OCI-LY7 (cell line): ENCODE measurements at regions of chr5 and their contacts with region 1.

Region 1: DNA sequence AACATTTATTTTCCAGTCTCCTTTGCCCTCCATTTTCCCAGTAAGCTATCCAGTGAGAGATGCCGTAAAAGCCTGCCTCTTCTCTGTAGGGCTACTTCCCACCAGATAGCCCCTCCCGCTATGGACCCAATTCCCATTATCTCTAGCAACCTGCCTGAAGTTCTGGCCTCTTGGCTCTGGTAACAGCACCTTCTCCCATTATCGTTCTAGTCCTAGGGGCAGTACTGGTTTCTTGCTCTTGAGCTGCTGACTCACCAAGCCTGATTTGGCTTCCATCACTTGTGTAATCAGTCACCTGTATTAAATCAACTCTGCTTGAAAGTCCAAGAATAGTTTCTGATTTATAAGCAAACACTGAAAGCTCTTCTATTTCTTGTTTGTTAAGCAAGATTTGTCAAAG is 42.8 kb upstream of the PARP8 start:
- DNase-seq: no peak
- H3K4me3 ChIP-seq: no peak overlapping the region
- H3K27ac ChIP-seq: no peak overlapping the region
- H3K4me1 ChIP-seq: no peaks in the 10 kb centered on the region
- CTCF ChIP-seq: no peak

Region 2: DNA sequence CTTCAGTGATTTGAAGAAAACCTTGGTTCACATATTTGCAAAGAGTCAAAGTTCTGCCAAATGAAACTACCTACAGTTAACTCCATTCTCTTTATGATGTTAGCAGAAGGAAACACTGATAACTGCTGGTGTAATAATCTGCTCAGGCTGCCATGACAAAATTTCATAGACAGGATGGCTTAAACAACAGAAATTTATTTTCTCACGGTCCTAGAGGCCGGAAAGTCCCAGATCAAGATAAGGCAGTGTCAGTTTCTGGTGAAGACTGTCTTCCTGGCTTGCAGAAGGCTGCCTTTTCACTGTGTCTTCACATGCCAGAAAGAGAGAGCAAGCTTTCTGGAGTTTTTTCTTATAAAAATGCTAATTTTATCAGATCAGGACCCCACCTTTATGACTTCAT is 59.6 kb before region 1 on chr5:
- CTCF ChIA-PET with region 1: no interaction called
- POLR2A ChIA-PET with region 1: no interaction called
- intact Hi-C with region 1: loop called (anchors 10 kb)
- DNase-seq: no peak
- H3K4me3 ChIP-seq: no peak overlapping the region
- H3K27ac ChIP-seq: no peak overlapping the region
- H3K4me1 ChIP-seq: peaks cover 12% of the 10 kb centered on the region
- CTCF ChIP-seq: no peak

Region 3: GRCh38 chr5:50606179-50606578 is 17.5 kb before region 1 on chr5:
- CTCF ChIA-PET with region 1: no interaction called
- POLR2A ChIA-PET with region 1: no interaction called
- intact Hi-C with region 1: no loop called
- DNase-seq: no peak
- H3K4me3 ChIP-seq: no peak overlapping the region
- H3K27ac ChIP-seq: no peak overlapping the region
- H3K4me1 ChIP-seq: peaks cover 5% of the 10 kb centered on the region
- CTCF ChIP-seq: no peak